Heart right ventricle (tissue), 16 donors: ENCODE measurements at regions of chr2 and their contacts with region 1.

Region 1: DNA sequence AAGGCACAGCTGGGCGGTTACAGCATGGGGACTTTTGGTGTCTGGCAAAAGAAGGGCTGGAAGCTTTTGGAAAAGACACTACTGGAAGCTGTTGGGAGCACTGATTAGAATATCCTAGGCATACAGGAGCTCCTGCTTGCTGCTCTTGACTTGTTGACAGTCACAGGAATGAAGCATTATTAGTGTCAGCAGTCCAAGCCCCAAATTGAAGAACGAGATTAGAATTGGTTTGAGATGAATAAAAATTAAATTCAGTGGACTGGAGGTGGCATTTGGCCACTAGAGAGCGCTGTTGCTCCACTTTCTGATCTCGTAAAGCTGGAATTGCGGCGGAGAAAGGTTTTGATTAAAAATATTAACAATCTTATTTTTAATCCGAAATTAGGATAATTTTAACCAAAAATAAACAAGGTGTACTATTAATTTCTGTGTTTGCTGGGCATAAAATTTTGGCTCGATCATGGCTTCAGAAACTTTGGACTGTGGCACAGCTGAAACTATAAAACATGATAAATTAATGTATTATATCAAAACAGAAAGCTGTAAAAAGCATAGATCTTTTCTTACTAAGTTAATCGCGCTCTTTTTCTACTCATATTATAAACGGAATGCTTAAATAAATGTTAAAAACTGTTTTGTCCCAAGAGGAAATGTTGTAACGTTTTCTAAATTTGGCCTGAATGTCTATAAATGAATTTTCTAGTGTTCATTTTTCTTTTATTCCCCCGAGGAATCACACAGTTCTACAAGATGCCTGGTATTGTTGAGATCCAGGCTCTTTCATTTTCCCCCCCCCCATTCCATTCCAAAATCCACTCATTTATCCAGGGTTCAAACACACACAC is 2.4 kb upstream of the HOXD8 start:
- DNase-seq: peak; percentile 39 to 78
- ATAC-seq: peak in 1 of 8 donors; percentile 56
- H3K4me3 ChIP-seq: no peak overlapping the region
- H3K27ac ChIP-seq: no peak overlapping the region
- H3K4me1 ChIP-seq: peaks cover 0 to 52% (median 25%) of the 10 kb centered on the region in 9 donors
- H3K27me3 ChIP-seq: peaks cover 62 to 99% (median 97%) of the 10 kb centered on the region in 7 donors
- CTCF ChIP-seq: peak; percentile 83 to 95 (median 92)

Region 2: GRCh38 chr2:176454893-176455811 is 328.0 kb after region 1 on chr2:
- intact Hi-C with region 1: loop called in 1 of 10 experiments (anchors 5 kb)
- DNase-seq: peak; percentile 81 to 84
- ATAC-seq: peak in 7 of 8 donors; percentile 34 to 78 (median 55)
- H3K4me3 ChIP-seq: no peak overlapping the region
- H3K27ac ChIP-seq: peak overlapping the region in 6 of 10 donors; percentile 23 to 63 (median 45)
- H3K4me1 ChIP-seq: peaks cover 0 to 21% (median 3%) of the 10 kb centered on the region in 9 donors
- H3K27me3 ChIP-seq: peaks cover 0 to 64% (median 10%) of the 10 kb centered on the region in 7 donors
- CTCF ChIP-seq: peak; percentile 81 to 97 (median 93)

Region 3: DNA sequence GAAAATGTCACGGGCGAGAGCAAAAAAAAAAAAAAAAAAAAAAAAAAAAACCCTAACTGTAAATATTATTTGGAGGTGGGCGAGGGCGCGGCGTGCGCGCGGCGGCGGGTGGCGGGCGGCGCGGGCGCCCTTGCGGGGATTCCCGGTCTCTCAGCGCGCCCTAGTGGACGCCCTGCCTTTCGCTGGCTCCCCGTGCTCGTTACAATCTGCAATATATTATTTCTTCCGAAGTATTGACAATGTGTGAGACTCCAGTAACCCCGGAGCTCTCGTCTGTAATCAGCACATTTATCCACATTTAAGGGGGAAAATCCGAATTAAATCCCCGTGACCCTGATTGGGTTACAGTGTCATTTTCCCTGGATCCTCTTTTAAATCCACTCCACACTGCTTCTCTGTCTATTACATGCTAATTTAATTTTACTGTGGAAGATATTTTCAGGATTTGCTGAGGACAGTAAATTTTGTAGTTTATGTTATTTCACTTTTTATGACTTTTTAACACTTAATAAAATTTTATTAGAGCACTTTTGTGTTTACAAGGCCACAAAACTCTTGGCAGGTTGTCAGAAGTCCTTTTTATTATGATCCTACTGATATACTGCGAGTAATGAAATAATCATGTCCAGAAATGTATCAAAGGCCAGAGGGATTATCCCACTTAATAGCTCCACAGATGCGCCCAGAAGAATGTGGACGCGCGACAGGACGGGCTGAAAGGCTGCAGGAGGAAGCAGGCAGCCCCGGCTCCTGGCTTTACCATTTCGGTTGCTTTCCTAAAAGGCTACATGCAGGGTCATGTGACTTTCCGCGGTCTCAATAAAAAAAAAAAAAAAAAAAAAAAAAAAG is 511.2 kb after region 1 on chr2:
- intact Hi-C with region 1: loop called in 7 of 10 experiments (anchors 1 to 5 kb)
- DNase-seq: peak; percentile 47 to 70
- ATAC-seq: peak; percentile 55 to 94 (median 92)
- H3K4me3 ChIP-seq: peak overlapping the region; percentile 43 to 66 (median 62)
- H3K27ac ChIP-seq: peak overlapping the region in 3 of 10 donors; percentile 45 to 64 (median 58)
- H3K4me1 ChIP-seq: peaks cover 0 to 14% (median 7%) of the 10 kb centered on the region in 9 donors
- H3K27me3 ChIP-seq: peaks cover 5 to 97% (median 87%) of the 10 kb centered on the region in 7 donors
- CTCF ChIP-seq: peak; percentile 68 to 88 (median 77)

Region 4: DNA sequence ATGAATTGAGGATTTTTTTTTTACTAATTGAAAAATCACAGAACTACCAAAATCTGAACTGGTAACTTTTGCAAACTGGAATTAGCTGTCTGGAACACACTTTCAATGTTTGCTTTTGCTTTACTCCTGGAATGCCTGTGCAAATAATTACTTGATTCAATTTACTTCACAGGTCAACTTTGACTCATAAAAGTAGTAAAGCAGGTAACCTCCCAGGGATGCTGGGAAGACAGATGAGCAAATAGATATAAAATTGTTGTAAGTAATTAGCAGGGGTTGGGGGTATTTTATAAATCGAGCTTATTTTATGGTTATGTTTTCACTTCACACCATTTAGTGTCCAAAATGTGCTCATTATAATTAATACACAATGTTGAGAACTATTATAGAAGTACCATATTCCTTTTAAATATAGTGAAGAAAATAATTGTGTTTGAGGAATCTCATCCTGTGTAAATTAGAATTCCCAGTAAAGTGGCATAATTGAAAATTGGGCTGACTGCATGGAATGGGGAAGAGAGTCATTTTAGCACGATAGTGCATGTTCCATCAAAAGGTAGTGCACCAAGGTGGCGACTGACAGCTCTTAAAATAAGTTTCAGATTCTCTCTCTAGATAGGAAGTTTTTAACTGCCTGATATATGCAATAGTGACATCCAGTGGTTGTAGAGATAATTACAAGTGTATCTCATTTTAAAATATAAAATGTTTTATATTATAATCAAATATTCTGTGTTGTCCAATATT is 687.3 kb after region 1 on chr2:
- intact Hi-C with region 1: loop called in 9 of 10 experiments (anchors 5 to 10 kb)
- DNase-seq: no peak
- ATAC-seq: no peak
- H3K4me3 ChIP-seq: no peak overlapping the region
- H3K27ac ChIP-seq: no peak overlapping the region
- H3K4me1 ChIP-seq: peaks cover 0 to 9% (median 0%) of the 10 kb centered on the region in 9 donors
- H3K27me3 ChIP-seq: peaks cover 0 to 13% (median 5%) of the 10 kb centered on the region in 7 donors
- CTCF ChIP-seq: peak; percentile 38 to 78 (median 66)